ENCODE measurements at regions of chr3 and their contacts with region 1.

Region 1: GRCh38 chr3:152026033-152026556 is 152.7 kb downstream of the SUCNR1 start:
- DNase-seq: peak; percentile 22 to 90
- H3K4me3 ChIP-seq: no peak overlapping the region; the same call in 1 of the 2 replicates
- H3K27ac ChIP-seq: peak overlapping the region; percentile 81
- H3K4me1 ChIP-seq: peaks cover 38% of the 10 kb centered on the region
- H3K27me3 ChIP-seq: no peaks in the 10 kb centered on the region
- CTCF ChIP-seq: peak; percentile 71

Region 2: GRCh38 chr3:151305101-151305750 is 720.9 kb before region 1 on chr3:
- CTCF ChIA-PET with region 1: no interaction called
- POLR2A ChIA-PET with region 1: interaction called, 4 read pairs
- intact Hi-C with region 1: loop called (anchors 1 kb)
- DNase-seq: peak; percentile 95 to 99
- H3K4me3 ChIP-seq: peak overlapping the region; percentile 51; the same call in 1 of the 2 replicates
- H3K27ac ChIP-seq: peak overlapping the region; percentile 96
- H3K4me1 ChIP-seq: peaks cover 77% of the 10 kb centered on the region
- H3K27me3 ChIP-seq: no peaks in the 10 kb centered on the region
- CTCF ChIP-seq: no peak

Region 3: DNA sequence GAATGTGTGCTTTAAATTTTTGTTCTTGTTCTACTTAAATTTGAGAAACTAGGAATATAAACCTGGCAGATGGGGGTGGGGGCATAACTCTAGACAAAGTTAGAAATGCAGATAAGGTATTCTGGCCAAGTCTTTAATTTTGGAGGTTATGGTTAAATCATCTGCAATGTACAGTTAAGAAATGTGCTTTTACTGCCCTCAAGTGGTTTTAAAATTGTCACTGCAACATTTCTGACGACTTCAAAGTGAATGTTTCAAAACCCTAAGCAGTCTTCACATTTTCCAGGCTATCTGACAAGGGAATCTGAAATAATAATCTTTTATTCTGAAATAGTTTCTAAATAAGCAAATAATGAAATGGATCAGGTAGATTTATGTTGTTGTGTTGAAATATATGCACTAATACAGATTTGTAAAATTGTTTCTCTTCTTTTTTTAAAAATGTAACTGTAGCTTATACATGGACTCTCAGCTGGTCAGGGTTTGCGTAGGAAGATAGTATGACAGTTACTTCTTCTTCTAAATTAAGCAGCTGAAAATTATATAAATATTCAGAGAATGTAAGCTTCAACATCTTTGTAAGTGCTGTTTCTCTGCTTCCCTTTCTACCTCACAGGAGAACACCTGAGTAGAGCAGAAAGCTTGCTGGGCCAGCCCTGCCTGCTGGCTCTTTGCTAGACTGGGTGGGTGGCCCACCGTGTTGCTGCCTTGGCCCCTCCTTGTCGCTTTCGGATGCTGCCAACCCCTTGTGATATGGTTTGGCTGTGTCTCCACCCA is 107.7 kb before region 1 on chr3:
- CTCF ChIA-PET with region 1: no interaction called
- POLR2A ChIA-PET with region 1: no interaction called
- intact Hi-C with region 1: loop called (anchors 1 kb)
- DNase-seq: peak in 1 of 2 experiments; percentile 49
- H3K4me3 ChIP-seq: no peak overlapping the region
- H3K27ac ChIP-seq: no peak overlapping the region
- H3K4me1 ChIP-seq: no peaks in the 10 kb centered on the region
- H3K27me3 ChIP-seq: no peaks in the 10 kb centered on the region
- CTCF ChIP-seq: peak; percentile 77

Region 4: GRCh38 chr3:151976211-151977050 is 49.7 kb before region 1 on chr3:
- CTCF ChIA-PET with region 1: no interaction called
- POLR2A ChIA-PET with region 1: no interaction called
- intact Hi-C with region 1: loop called (anchors 1 kb)
- DNase-seq: peak; percentile 49 to 93
- H3K4me3 ChIP-seq: peak overlapping the region; percentile 8; the same call in 1 of the 2 replicates
- H3K27ac ChIP-seq: peak overlapping the region; percentile 42
- H3K4me1 ChIP-seq: peaks cover 16% of the 10 kb centered on the region
- H3K27me3 ChIP-seq: no peaks in the 10 kb centered on the region
- CTCF ChIP-seq: no peak

Region 5: DNA sequence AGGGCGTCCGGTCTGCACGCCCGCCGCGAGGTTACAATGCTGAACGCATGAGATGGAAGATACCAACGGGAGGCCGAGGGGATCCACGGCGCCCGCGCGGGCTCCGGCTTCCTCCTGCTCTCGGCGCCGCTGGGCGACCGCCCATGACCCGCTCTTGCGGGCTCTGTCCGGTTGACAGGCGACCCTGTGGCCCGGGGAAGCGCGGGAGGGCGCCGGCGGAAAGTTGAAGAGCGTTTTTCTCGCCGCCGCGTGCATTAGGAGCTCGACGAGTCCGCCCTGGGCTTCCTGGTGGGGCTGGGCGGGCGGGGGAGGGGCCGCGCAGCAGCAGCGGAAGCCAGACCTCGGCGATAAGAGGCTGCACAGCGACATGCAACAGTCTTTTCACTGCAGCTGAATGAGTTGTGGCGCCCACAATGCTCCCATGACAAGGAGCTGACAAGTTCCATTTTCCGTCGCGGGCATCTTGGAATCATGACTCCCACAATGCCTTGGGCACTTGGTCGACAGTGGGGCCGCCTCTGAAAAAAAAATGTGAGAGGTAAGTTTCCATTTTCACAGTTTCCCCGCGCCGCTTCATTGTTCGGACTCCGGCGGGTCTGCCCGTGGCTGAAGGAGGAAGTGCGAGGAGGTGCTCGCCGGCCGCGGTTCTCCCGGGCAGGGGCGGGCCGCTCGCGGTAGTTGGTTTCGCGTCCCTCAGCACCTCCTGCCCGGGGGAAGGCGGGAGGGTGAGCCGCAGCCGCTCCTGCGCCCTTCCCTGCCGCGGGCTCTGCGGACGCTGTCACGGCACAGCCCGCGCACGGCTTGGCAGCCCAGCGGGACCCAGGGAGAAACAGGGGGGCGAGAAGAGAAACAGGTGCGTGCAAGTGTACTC is 242.7 kb after region 1 on chr3 and contains the start of gene MBNL1:
- CTCF ChIA-PET with region 1: interaction called, 4 read pairs
- POLR2A ChIA-PET with region 1: interaction called, 12 read pairs
- intact Hi-C with region 1: loop called (anchors 1 kb)
- DNase-seq: peak; percentile 71 to 77
- H3K4me3 ChIP-seq: peak within 1 kb of the TSS; percentile 85
- H3K27ac ChIP-seq: peak within 1 kb of the TSS; percentile 88
- H3K4me1 ChIP-seq: peaks cover 53% of the 10 kb centered on the region
- H3K27me3 ChIP-seq: no peaks in the 10 kb centered on the region
- CTCF ChIP-seq: no peak
- total RNA-seq, gene MBNL1: 122 and 176 TPM in 2 replicates

Region 6: GRCh38 chr3:152444029-152444641 is 418.0 kb after region 1 on chr3:
- CTCF ChIA-PET with region 1: interaction called, 5 read pairs
- POLR2A ChIA-PET with region 1: no interaction called
- intact Hi-C with region 1: loop called (anchors 1 kb)
- DNase-seq: peak in 1 of 2 experiments; percentile 63
- H3K4me3 ChIP-seq: no peak overlapping the region
- H3K27ac ChIP-seq: peak overlapping the region; percentile 10; the same call in 1 of the 2 replicates
- H3K4me1 ChIP-seq: no peaks in the 10 kb centered on the region
- H3K27me3 ChIP-seq: no peaks in the 10 kb centered on the region
- CTCF ChIP-seq: peak; percentile 87

Region 7: GRCh38 chr3:153192327-153192726 is 1166.2 kb after region 1 on chr3:
- CTCF ChIA-PET with region 1: no interaction called
- POLR2A ChIA-PET with region 1: no interaction called
- intact Hi-C with region 1: no loop called
- DNase-seq: no peak
- H3K4me3 ChIP-seq: no peak overlapping the region
- H3K27ac ChIP-seq: no peak overlapping the region
- H3K4me1 ChIP-seq: no peaks in the 10 kb centered on the region
- H3K27me3 ChIP-seq: no peaks in the 10 kb centered on the region
- CTCF ChIP-seq: no peak

Measured in PC-9 (cell line).